ENCODE measurements at regions of chr1 and their contacts with region 1.

Region 1: GRCh38 chr1:101309334-101310311 is 72.8 kb downstream of the S1PR1 start:
- DNase-seq: peak; percentile 77
- H3K4me3 Mint-ChIP-seq: peak overlapping the region; percentile 69
- H3K27ac Mint-ChIP-seq: peak overlapping the region; percentile 78
- H3K4me1 Mint-ChIP-seq: peaks cover 74% of the 10 kb centered on the region
- H3K27me3 Mint-ChIP-seq: no peaks in the 10 kb centered on the region

Region 2: GRCh38 chr1:101136739-101137138 is 172.9 kb before region 1 on chr1:
- CTCF ChIA-PET with region 1: interaction called, 10 read pairs
- POLR2A ChIA-PET with region 1: no interaction called
- intact Hi-C with region 1: no loop called
- DNase-seq: peak; percentile 31
- H3K4me3 Mint-ChIP-seq: peak overlapping the region; percentile 14
- H3K27ac Mint-ChIP-seq: peak overlapping the region; percentile 79
- H3K4me1 Mint-ChIP-seq: peaks cover 60% of the 10 kb centered on the region
- H3K27me3 Mint-ChIP-seq: no peaks in the 10 kb centered on the region

Region 3: DNA sequence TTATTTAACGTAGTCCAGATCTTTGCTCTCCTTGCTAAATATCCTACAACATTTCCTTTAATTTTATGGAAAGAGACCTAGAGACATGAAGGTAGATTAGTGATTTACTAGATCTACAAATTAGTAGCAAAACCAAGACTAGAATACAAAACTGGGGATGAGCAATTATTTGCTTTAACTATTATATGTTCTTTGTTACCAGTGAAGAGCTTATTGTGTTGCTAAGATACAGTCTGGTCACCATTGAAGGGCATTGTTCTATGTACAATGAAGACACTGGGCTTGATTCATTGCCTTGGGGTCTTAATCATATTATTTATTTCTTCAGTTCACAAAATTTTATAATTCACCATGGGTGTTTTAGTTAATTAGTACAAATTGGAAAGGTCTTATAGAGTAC is 15.5 kb after region 1 on chr1:
- CTCF ChIA-PET with region 1: interaction called, 15 read pairs
- POLR2A ChIA-PET with region 1: no interaction called
- intact Hi-C with region 1: no loop called
- DNase-seq: no peak
- H3K4me3 Mint-ChIP-seq: no peak overlapping the region
- H3K27ac Mint-ChIP-seq: no peak overlapping the region
- H3K4me1 Mint-ChIP-seq: no peaks in the 10 kb centered on the region
- H3K27me3 Mint-ChIP-seq: no peaks in the 10 kb centered on the region

Region 4: DNA sequence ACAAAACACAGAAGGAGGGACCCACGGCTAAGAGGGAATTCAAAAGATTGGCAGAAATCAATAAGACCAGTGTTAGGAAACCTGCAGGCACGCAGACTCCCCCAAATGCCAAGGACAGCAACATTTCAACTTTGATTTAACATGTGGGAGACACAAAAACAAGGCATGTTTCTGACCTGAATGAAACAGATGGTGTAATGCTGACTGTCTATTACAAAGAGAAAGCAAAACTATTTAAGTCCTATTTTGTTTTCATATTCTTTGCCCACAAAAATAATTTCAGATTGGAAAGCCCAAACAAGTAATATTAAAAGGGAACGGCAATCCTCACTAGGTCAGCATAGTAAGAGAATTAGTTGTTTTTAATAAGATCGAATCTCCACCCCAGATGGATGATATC is 35.1 kb after region 1 on chr1:
- CTCF ChIA-PET with region 1: interaction called, 20 read pairs
- POLR2A ChIA-PET with region 1: no interaction called
- intact Hi-C with region 1: no loop called
- DNase-seq: no peak
- H3K4me3 Mint-ChIP-seq: no peak overlapping the region
- H3K27ac Mint-ChIP-seq: no peak overlapping the region
- H3K4me1 Mint-ChIP-seq: peaks cover 35% of the 10 kb centered on the region
- H3K27me3 Mint-ChIP-seq: no peaks in the 10 kb centered on the region

Region 5: DNA sequence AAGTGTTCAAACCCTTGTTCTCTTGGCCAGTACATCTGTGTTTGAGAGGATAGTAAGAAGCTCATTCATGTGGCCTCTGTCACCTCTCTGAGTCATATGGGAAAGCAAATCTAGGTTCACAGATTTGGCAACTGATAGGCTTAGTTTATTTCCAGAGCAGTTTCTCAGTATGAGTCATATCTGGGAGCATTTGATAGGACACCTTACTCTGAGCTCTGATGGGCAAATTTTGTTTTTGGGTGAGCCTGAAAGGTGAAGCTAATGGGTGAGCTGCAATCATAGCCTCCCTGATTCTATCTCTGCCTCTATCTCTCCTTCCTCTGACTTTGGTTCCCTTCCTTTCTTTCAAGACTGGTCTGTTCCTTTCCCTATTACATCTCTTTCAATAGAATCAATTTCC is 61.6 kb after region 1 on chr1:
- CTCF ChIA-PET with region 1: interaction called, 16 read pairs
- POLR2A ChIA-PET with region 1: interaction called, 3 read pairs
- intact Hi-C with region 1: no loop called
- DNase-seq: peak; percentile 17
- H3K4me3 Mint-ChIP-seq: no peak overlapping the region
- H3K27ac Mint-ChIP-seq: no peak overlapping the region
- H3K4me1 Mint-ChIP-seq: peaks cover 11% of the 10 kb centered on the region
- H3K27me3 Mint-ChIP-seq: no peaks in the 10 kb centered on the region

Region 6: GRCh38 chr1:101451888-101452287 is 142.3 kb after region 1 on chr1:
- CTCF ChIA-PET with region 1: interaction called, 6 read pairs
- POLR2A ChIA-PET with region 1: no interaction called
- intact Hi-C with region 1: loop called (anchors 2 kb)
- DNase-seq: peak; percentile 44
- H3K4me3 Mint-ChIP-seq: no peak overlapping the region
- H3K27ac Mint-ChIP-seq: peak overlapping the region; percentile 31
- H3K4me1 Mint-ChIP-seq: peaks cover 34% of the 10 kb centered on the region
- H3K27me3 Mint-ChIP-seq: peaks cover 10% of the 10 kb centered on the region

Region 7: GRCh38 chr1:101506541-101507164 is 197.0 kb after region 1 on chr1:
- CTCF ChIA-PET with region 1: interaction called, 12 read pairs
- POLR2A ChIA-PET with region 1: no interaction called
- intact Hi-C with region 1: loop called (anchors 2 kb)
- DNase-seq: peak; percentile 29
- H3K4me3 Mint-ChIP-seq: no peak overlapping the region
- H3K27ac Mint-ChIP-seq: no peak overlapping the region
- H3K4me1 Mint-ChIP-seq: no peaks in the 10 kb centered on the region
- H3K27me3 Mint-ChIP-seq: no peaks in the 10 kb centered on the region

Measured in activated CD4-positive, alpha-beta memory T cell treated with anti-CD3 and anti-CD28 coated beads for 36 hours (primary cell).